ENCODE measurements at regions of chr2 and their contacts with region 1.

Region 1: GRCh38 chr2:10434886-10435819 is 13.0 kb downstream of the ODC1 start:
- DNase-seq: peak; percentile 43
- ATAC-seq: peak; percentile 72
- H3K4me3 ChIP-seq: no peak overlapping the region
- H3K27ac ChIP-seq: no peak overlapping the region
- H3K4me1 ChIP-seq: peaks cover 4 to 34% of the 10 kb centered on the region in 2 experiments; a peak in 3 of 4 replicates
- H3K27me3 ChIP-seq: no peaks in the 10 kb centered on the region
- CTCF ChIP-seq: peak; percentile 92 to 96 (median 95)
- POLR2A ChIP-seq: no peak
- RAD21 ChIP-seq: peak; percentile 100

Region 2: DNA sequence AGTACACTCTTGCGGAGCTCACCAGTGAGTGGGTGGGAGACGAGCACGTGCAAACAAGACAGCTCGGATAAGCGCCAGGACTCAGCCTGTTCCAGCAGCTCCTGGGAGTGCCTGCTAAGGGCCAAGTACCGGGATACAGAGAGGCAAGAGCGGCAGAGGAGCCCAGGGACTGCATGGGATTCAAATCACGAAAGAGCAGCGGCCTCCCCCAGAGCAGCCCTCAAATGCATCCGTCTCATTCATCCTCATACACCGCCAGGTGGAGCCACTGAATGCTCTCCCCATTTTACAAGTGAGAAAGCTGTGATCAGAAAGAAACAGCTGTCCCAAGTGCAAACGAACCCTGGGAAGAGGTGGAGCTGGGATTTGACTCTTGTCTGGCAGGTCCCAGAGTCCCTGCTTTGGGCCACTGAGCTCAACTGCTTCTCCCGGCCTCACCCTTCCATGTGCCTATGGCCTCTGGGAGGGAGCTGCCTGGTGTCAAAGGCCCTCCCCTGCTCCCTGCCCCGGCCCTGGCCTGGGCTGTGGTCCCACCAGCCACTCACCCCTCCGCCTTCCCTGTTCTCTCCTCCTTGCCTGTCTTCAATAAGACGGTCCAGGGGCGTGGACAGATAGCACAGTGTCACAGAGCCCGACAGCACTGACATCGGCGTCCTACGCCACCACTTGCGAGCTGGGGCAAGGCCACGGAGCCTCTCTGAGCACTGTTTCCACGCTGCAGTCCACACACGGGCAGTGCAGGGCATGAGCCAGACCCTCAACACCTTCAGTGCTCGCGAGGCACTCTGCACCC is 664.6 kb before region 1 on chr2:
- CTCF ChIA-PET with region 1: interaction called, 10 read pairs
- POLR2A ChIA-PET with region 1: no interaction called
- RAD21 ChIA-PET with region 1: no interaction called
- intact Hi-C with region 1: loop called (anchors 10 kb)
- DNase-seq: peak; percentile 42
- ATAC-seq: peak; percentile 87
- H3K4me3 ChIP-seq: no peak overlapping the region
- H3K27ac ChIP-seq: no peak overlapping the region; the same call in 1 of the 2 replicates
- H3K4me1 ChIP-seq: peaks cover 17 to 29% of the 10 kb centered on the region in 2 experiments; a peak in 3 of 4 replicates
- H3K27me3 ChIP-seq: no peaks in the 10 kb centered on the region
- CTCF ChIP-seq: peak; percentile 69 to 80 (median 73)
- POLR2A ChIP-seq: no peak
- RAD21 ChIP-seq: peak; percentile 74

Region 3: GRCh38 chr2:9889812-9890261 is 545.3 kb before region 1 on chr2:
- CTCF ChIA-PET with region 1: no interaction called
- POLR2A ChIA-PET with region 1: no interaction called
- RAD21 ChIA-PET with region 1: no interaction called
- intact Hi-C with region 1: no loop called
- DNase-seq: no peak
- ATAC-seq: no peak
- H3K4me3 ChIP-seq: no peak overlapping the region
- H3K27ac ChIP-seq: no peak overlapping the region
- H3K4me1 ChIP-seq: no peaks in the 10 kb centered on the region
- H3K27me3 ChIP-seq: no peaks in the 10 kb centered on the region
- CTCF ChIP-seq: no peak
- POLR2A ChIP-seq: no peak
- RAD21 ChIP-seq: no peak

Region 4: GRCh38 chr2:10072656-10073480 is 362.3 kb before region 1 on chr2:
- CTCF ChIA-PET with region 1: interaction called, 69 read pairs
- POLR2A ChIA-PET with region 1: no interaction called
- RAD21 ChIA-PET with region 1: interaction called, 11 to 18 read pairs
- intact Hi-C with region 1: loop called (anchors 1 kb)
- DNase-seq: peak; percentile 69
- ATAC-seq: peak; percentile 98
- H3K4me3 ChIP-seq: no peak overlapping the region
- H3K27ac ChIP-seq: no peak overlapping the region
- H3K4me1 ChIP-seq: peaks cover 0 to 8% of the 10 kb centered on the region in 2 experiments; a peak in 2 of 4 replicates
- H3K27me3 ChIP-seq: no peaks in the 10 kb centered on the region
- CTCF ChIP-seq: peak; percentile 86 to 93 (median 92)
- POLR2A ChIP-seq: no peak
- RAD21 ChIP-seq: peak; percentile 92

Region 5: DNA sequence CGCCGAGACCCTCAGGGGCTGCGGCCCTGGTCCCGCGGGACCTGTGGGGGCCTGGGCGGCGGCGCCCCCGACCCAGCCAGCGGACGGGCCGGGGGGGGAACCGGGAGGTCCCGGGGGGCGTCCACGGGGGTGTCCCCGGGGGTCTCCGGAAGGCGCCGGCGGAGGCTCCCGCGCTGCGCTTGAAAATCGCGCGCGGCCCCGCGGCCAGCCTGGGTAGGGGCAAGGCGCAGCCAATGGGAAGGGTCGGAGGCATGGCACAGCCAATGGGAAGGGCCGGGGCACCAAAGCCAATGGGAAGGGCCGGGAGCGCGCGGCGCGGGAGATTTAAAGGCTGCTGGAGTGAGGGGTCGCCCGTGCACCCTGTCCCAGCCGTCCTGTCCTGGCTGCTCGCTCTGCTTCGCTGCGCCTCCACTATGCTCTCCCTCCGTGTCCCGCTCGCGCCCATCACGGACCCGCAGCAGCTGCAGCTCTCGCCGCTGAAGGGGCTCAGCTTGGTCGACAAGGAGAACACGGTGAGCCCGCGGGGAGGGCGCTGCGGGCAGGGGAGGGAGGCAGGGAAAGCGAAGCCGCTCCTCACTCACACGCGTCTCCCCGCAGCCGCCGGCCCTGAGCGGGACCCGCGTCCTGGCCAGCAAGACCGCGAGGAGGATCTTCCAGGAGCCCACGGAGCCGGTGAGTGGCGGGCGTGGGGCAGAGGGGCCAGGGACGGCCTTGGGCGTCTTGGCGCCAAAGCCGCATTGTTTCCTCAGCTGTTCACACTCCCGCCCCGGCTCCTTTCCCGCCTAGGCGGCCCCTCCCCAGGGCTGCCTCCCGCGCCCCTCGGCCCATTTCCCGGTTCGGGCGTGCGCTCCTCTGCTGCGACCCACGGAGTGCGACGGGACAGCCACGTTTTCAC is 312.5 kb before region 1 on chr2 and contains the start of gene RRM2:
- CTCF ChIA-PET with region 1: interaction called, 55 read pairs
- POLR2A ChIA-PET with region 1: interaction called, 9 read pairs
- RAD21 ChIA-PET with region 1: interaction called, 5 to 7 read pairs
- intact Hi-C with region 1: loop called (anchors 1 kb)
- DNase-seq: peak; percentile 91
- ATAC-seq: peak; percentile 81
- H3K4me3 ChIP-seq: peak within 1 kb of the TSS; percentile 86 to 96
- H3K27ac ChIP-seq: peak within 1 kb of the TSS; percentile 80
- H3K4me1 ChIP-seq: peaks cover 18 to 45% of the 10 kb centered on the region in 2 experiments; a peak in 3 of 4 replicates
- H3K27me3 ChIP-seq: no peaks in the 10 kb centered on the region
- CTCF ChIP-seq: no peak
- POLR2A ChIP-seq: peak; percentile 95
- RAD21 ChIP-seq: no peak
- total RNA-seq, gene RRM2: 330 TPM

Region 6: GRCh38 chr2:10269711-10270610 is 165.2 kb before region 1 on chr2:
- CTCF ChIA-PET with region 1: interaction called, 11 read pairs
- POLR2A ChIA-PET with region 1: no interaction called
- RAD21 ChIA-PET with region 1: interaction called in 1 of 2 experiments, 4 read pairs
- intact Hi-C with region 1: loop called (anchors 1 kb)
- DNase-seq: no peak
- ATAC-seq: peak; percentile 31
- H3K4me3 ChIP-seq: no peak overlapping the region
- H3K27ac ChIP-seq: no peak overlapping the region; the same call in 1 of the 2 replicates
- H3K4me1 ChIP-seq: peaks cover 10 to 26% of the 10 kb centered on the region in 2 experiments; a peak in 3 of 4 replicates
- H3K27me3 ChIP-seq: no peaks in the 10 kb centered on the region
- CTCF ChIP-seq: no peak
- POLR2A ChIP-seq: no peak
- RAD21 ChIP-seq: no peak

Measured in HCT116 (cell line).